Calu3 (cell line): ENCODE measurements at regions of chr11 and their contacts with region 1.

Region 1: DNA sequence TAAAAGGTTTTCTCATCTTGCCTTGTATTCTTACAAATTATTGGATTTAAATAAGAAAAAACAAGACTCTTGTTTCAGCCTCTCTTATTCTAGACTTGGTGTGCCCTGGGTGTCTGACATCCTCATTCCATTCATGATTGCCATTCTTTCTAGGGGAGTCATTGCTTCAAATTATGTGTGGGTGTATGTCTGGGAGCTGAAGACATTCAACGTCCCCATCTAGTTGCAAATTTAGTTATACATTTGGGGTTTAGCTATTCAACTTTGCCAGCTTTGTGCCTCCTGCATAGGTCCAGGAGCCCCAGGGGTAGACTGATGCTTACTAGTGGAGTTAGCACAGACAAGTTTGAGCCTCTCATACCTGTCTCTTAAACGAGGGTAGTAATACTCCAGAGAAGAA is 18.0 kb downstream of the MAML2 start:
- DNase-seq: no peak
- H3K4me3 Mint-ChIP-seq: no peak overlapping the region
- H3K27ac Mint-ChIP-seq: peak overlapping the region; percentile 71
- H3K4me1 Mint-ChIP-seq: peaks cover 50% of the 10 kb centered on the region
- H3K27me3 Mint-ChIP-seq: no peaks in the 10 kb centered on the region
- CTCF ChIP-seq: no peak

Region 2: DNA sequence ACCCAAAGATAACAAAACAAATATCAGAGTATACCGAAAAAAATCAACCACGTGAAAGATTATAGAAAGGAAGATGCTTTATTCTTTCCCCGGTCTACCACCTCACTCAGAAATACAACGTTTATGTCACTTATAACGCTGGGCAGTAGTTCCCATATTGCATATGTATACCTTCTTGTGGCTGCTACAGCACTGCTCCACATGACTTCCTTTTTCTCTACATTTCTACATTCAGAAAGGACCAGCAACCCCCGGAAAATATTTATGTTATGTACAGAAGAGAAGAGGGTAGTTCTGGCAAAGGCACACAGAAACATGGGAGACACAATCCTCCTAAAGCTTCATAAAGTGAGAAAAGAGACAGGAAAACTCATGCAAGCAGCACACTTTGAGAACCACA is 457.9 kb before region 1 on chr11:
- CTCF ChIA-PET with region 1: no interaction called
- intact Hi-C with region 1: no loop called
- DNase-seq: no peak
- H3K4me3 Mint-ChIP-seq: no peak overlapping the region
- H3K27ac Mint-ChIP-seq: no peak overlapping the region
- H3K4me1 Mint-ChIP-seq: no peaks in the 10 kb centered on the region
- H3K27me3 Mint-ChIP-seq: no peaks in the 10 kb centered on the region
- CTCF ChIP-seq: no peak

Region 3: DNA sequence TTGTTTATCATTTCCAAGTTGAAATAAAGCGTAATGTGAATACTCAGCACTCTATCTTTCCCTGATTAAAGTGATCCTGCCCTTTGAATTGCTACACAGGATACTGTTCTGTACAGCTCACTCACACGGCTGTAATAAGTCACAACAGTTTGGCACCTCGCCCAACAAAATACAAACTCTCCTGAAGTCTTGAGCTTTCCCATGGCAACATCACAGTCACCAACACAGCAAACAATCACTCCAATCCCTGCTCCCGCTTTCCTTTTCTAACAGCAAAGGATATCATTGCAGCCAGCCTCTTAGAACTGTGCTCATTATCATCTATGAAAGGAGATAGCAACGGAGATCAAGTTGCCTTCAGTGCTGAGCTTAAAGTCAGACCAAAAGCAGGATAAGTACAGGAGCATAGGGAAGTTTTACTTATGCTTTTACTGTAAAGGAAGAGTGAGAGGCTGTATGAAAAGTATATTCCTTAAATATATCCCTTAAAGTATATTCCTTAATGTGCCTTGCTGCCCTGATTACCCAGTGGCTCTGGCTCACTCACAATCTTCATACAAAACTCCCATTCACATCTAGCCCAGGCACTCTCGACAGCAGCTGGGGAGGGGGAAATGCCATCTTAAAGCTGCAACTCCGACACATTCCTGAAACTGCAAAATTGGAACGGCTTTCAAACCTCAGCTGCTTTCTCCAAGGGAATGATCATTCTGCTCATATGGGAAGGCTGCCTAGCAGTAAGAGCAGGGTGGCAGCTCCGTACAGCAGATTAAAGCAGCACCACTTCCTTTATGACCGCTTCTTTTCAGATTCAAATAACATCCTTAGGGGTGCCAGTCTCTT is 17.8 kb before region 1 on chr11:
- CTCF ChIA-PET with region 1: interaction called, 4 read pairs
- intact Hi-C with region 1: loop called (anchors 1 kb)
- DNase-seq: peak; percentile 82
- H3K4me3 Mint-ChIP-seq: peak overlapping the region; percentile 60
- H3K27ac Mint-ChIP-seq: peak overlapping the region; percentile 98
- H3K4me1 Mint-ChIP-seq: peaks cover 61% of the 10 kb centered on the region
- H3K27me3 Mint-ChIP-seq: no peaks in the 10 kb centered on the region
- CTCF ChIP-seq: no peak